CD4-positive, alpha-beta T cell (primary cell): ENCODE measurements at regions of chr16 and their contacts with region 1.

Region 1: GRCh38 chr16:21523411-21524067 is 75.8 kb upstream of the METTL9 start:
- DNase-seq: peak in 1 of 14 experiments; percentile 29
- ATAC-seq: no peak
- H3K4me3 ChIP-seq: no peak overlapping the region
- H3K4me3 Mint-ChIP-seq: peak overlapping the region; percentile 51
- H3K27ac ChIP-seq: no peak overlapping the region
- H3K27ac Mint-ChIP-seq: no peak overlapping the region
- H3K4me1 ChIP-seq: peaks cover 9% of the 10 kb centered on the region
- H3K4me1 Mint-ChIP-seq: peaks cover 9% of the 10 kb centered on the region
- H3K27me3 ChIP-seq: no peaks in the 10 kb centered on the region
- H3K27me3 Mint-ChIP-seq: no peaks in the 10 kb centered on the region
- CTCF ChIP-seq: no peak

Region 2: GRCh38 chr16:21501909-21502667 is 21.5 kb before region 1 on chr16:
- CTCF ChIA-PET with region 1: no interaction called
- POLR2A ChIA-PET with region 1: interaction called, 16 read pairs
- intact Hi-C with region 1: no loop called
- DNase-seq: peak; percentile 78 to 96 (median 88)
- ATAC-seq: peak; percentile 82
- H3K4me3 ChIP-seq: peak overlapping the region; percentile 80
- H3K4me3 Mint-ChIP-seq: peak overlapping the region; percentile 92
- H3K27ac ChIP-seq: peak overlapping the region; percentile 95 to 98
- H3K27ac Mint-ChIP-seq: peak overlapping the region; percentile 90
- H3K4me1 ChIP-seq: peaks cover 32% of the 10 kb centered on the region
- H3K4me1 Mint-ChIP-seq: peaks cover 21% of the 10 kb centered on the region
- H3K27me3 ChIP-seq: no peaks in the 10 kb centered on the region
- H3K27me3 Mint-ChIP-seq: no peaks in the 10 kb centered on the region
- CTCF ChIP-seq: no peak

Region 3: DNA sequence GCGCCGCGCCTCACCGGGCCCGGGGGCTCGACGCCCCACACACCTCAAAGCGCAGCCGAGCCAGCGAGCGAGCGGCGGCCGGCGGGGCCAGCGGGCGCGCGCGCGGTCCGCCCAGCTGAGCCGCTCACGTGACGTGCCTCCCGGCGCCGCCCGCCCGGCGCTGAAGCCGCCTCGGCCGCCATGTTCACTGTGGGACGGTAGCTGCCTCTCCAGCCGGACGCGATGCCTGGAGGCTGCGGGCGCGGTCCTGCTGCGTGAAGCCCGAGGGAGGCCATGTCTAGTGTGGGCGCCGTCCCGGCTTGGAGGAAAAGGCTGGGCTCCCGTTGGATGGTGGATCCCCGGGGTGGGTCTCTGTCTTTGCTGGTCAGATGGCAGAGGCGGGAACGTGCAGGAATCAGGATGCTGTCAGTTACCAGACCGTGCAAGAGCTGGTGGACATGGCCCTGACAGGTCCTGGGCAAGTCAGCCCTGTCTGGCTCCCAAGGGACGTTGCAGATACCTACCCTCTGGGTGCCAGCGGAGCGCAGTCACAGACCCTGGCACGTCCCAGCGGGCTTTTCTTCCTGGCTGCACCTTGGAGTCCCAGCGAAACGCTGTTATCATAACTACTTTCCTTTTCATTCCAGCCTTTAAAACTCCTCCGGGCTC is 1625.9 kb after region 1 on chr16 and contains the start of gene USP31:
- CTCF ChIA-PET with region 1: no interaction called
- POLR2A ChIA-PET with region 1: no interaction called
- intact Hi-C with region 1: loop called in 1 of 2 experiments (anchors 5 kb)
- DNase-seq: peak; percentile 79 to 95 (median 88)
- ATAC-seq: peak; percentile 97
- H3K4me3 ChIP-seq: peak within 1 kb of the TSS; percentile 80
- H3K4me3 Mint-ChIP-seq: peak within 1 kb of the TSS; percentile 96
- H3K27ac ChIP-seq: no peak within 1 kb of the TSS
- H3K27ac Mint-ChIP-seq: peak within 1 kb of the TSS; percentile 83
- H3K4me1 ChIP-seq: peaks cover 15% of the 10 kb centered on the region
- H3K4me1 Mint-ChIP-seq: peaks cover 27% of the 10 kb centered on the region
- H3K27me3 ChIP-seq: peaks cover 0 to 4% of the 10 kb centered on the region in 2 experiments
- H3K27me3 Mint-ChIP-seq: peaks cover 17% of the 10 kb centered on the region
- CTCF ChIP-seq: no peak
- total RNA-seq, gene USP31: 1.6 to 1.7 TPM